PC-3 (cell line): ENCODE measurements at regions of chr14 and their contacts with region 1.

Region 1: GRCh38 chr14:105023791-105024480 is 3.1 kb upstream of the CDCA4 start:
- DNase-seq: peak; percentile 91
- ATAC-seq: no peak
- H3K4me3 ChIP-seq: peak overlapping the region; percentile 48
- H3K27ac ChIP-seq: peak overlapping the region; percentile 98
- H3K4me1 ChIP-seq: peaks cover 70% of the 10 kb centered on the region
- H3K27me3 ChIP-seq: no peaks in the 10 kb centered on the region
- CTCF ChIP-seq: no peak

Region 2: DNA sequence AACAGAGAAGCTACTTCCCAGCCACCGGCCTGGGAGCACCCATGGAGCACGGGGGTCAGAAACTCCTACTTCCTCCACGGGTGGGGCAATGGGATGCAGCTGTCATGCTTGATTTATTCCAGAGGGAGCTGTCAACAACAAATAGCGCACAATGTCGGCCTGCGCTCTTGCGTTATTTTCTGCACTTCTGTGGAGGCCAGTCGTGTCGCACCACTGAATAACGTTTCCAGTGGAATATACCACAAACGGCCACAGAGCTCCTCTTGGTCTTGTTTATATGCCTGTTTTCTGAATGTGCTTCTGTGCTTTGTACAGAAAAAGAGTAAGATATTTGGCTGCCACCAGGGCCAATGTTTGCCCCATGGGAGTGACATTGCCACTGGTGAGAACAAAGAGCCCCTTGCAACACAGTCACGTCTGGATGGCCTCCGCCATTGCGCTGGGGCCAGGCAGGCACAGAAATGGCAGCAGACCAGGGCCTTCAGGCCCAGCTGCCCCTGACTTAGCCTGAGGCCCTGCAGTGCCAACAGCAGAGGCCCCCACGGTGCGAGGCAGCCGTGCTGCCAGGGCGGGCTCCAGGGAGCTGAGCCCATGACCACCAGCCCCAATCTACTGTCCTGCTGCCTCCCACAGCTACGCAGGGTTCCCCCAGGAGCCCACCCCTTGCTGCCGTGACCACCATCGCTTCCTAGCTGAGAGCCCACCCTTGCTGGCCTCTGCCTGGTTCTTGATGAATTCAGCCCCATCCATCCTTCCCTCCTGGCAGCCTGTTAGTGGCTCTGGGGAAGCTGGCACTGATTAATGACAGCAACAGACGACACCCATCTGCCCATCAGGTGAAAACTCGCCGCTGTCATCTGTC is 390.4 kb before region 1 on chr14:
- CTCF ChIA-PET with region 1: no interaction called
- POLR2A ChIA-PET with region 1: no interaction called
- intact Hi-C with region 1: no loop called
- DNase-seq: no peak
- ATAC-seq: no peak
- H3K4me3 ChIP-seq: no peak overlapping the region
- H3K27ac ChIP-seq: no peak overlapping the region
- H3K4me1 ChIP-seq: 0 out of 2 replicates have a peak, but pooled peaks cover 10% of the 10 kb centered on the region
- H3K27me3 ChIP-seq: peaks cover 93% of the 10 kb centered on the region
- CTCF ChIP-seq: no peak

Region 3: GRCh38 chr14:104882325-104883115 is 141.4 kb before region 1 on chr14:
- CTCF ChIA-PET with region 1: no interaction called
- POLR2A ChIA-PET with region 1: no interaction called
- intact Hi-C with region 1: no loop called
- DNase-seq: peak; percentile 82
- ATAC-seq: peak; percentile 97
- H3K4me3 ChIP-seq: no peak overlapping the region
- H3K27ac ChIP-seq: no peak overlapping the region
- H3K4me1 ChIP-seq: peaks cover 3% of the 10 kb centered on the region; the same call in 1 of the 2 replicates
- H3K27me3 ChIP-seq: no peaks in the 10 kb centered on the region
- CTCF ChIP-seq: no peak

Region 4: GRCh38 chr14:104913435-104913834 is 110.5 kb before region 1 on chr14:
- CTCF ChIA-PET with region 1: no interaction called
- POLR2A ChIA-PET with region 1: no interaction called
- intact Hi-C with region 1: no loop called
- DNase-seq: no peak
- ATAC-seq: no peak
- H3K4me3 ChIP-seq: no peak overlapping the region
- H3K27ac ChIP-seq: no peak overlapping the region
- H3K4me1 ChIP-seq: no peaks in the 10 kb centered on the region
- H3K27me3 ChIP-seq: no peaks in the 10 kb centered on the region
- CTCF ChIP-seq: no peak

Region 5: DNA sequence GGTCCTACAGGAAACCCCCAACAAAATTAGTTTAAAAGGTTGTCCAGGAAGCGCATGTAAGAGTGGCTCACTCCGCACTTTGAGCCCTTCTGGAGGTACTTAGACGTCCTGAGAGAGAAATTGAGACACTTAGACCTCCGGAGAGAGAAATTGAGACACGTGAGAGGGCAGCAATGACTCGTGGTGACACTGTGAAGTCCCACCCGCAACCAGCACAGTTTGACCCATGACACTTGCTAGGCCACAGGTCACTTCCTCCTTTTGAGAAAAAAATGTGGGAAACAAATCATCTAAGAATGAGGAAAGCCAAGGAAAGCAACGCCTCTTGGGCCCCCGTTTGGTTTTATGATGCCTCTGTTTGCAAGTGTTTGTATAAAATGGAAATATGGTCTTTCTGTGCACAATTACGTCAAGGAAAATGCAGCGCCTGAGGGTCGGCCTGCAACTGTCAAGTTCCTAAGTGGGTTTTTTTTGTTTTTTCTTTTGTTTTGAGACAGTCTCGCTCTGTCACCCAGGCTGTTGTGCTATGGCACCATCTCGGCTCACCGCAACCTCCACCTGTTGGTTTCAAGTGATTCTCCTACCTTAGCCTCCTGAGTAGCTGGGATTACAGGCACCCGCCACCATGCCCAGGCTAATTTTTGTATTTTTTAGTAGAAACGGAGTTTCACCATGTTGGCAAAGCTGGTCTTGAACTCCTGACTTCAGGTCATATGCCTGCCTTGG is 10.5 kb after region 1 on chr14:
- CTCF ChIA-PET with region 1: no interaction called
- POLR2A ChIA-PET with region 1: no interaction called
- intact Hi-C with region 1: loop called (anchors 1 kb)
- DNase-seq: no peak
- ATAC-seq: no peak
- H3K4me3 ChIP-seq: no peak overlapping the region
- H3K27ac ChIP-seq: no peak overlapping the region
- H3K4me1 ChIP-seq: peaks cover 10% of the 10 kb centered on the region
- H3K27me3 ChIP-seq: no peaks in the 10 kb centered on the region
- CTCF ChIP-seq: no peak

Region 6: GRCh38 chr14:105118656-105119403 is 94.9 kb after region 1 on chr14:
- CTCF ChIA-PET with region 1: no interaction called
- POLR2A ChIA-PET with region 1: no interaction called
- intact Hi-C with region 1: no loop called
- DNase-seq: peak; percentile 87
- ATAC-seq: peak; percentile 93
- H3K4me3 ChIP-seq: peak overlapping the region; percentile 30; the same call in 1 of the 2 replicates
- H3K27ac ChIP-seq: peak overlapping the region; percentile 25
- H3K4me1 ChIP-seq: peaks cover 22% of the 10 kb centered on the region
- H3K27me3 ChIP-seq: no peaks in the 10 kb centered on the region
- CTCF ChIP-seq: no peak